ENCODE measurements at regions of chr1 and their contacts with region 1.

Region 1: GRCh38 chr1:203048555-203049051 is 22.3 kb downstream of the PPFIA4 start:
- DNase-seq: no peak
- ATAC-seq: peak; percentile 64
- H3K4me3 ChIP-seq: no peak overlapping the region
- H3K27ac ChIP-seq: no peak overlapping the region
- H3K4me1 ChIP-seq: no peaks in the 10 kb centered on the region
- H3K27me3 ChIP-seq: peaks cover 0 to 2% of the 10 kb centered on the region in 2 experiments; a peak in 1 of 4 replicates
- CTCF ChIP-seq: no peak
- EP300 ChIP-seq: no peak
- POLR2A ChIP-seq: no peak
- RAD21 ChIP-seq: no peak

Region 2: GRCh38 chr1:203006948-203007871 is 41.4 kb before region 1 on chr1 and contains the start of gene TMEM183A:
- CTCF ChIA-PET with region 1: no interaction called
- POLR2A ChIA-PET with region 1: no interaction called
- RAD21 ChIA-PET with region 1: no interaction called
- SMC1A ChIA-PET with region 1: no interaction called
- in situ Hi-C with region 1: no loop called
- intact Hi-C with region 1: no loop called
- DNase-seq: peak; percentile 92
- ATAC-seq: peak; percentile 91
- H3K4me3 ChIP-seq: peak within 1 kb of the TSS; percentile 99
- H3K27ac ChIP-seq: peak within 1 kb of the TSS; percentile 96
- H3K4me1 ChIP-seq: peaks cover 5% of the 10 kb centered on the region
- H3K27me3 ChIP-seq: no peaks in the 10 kb centered on the region
- CTCF ChIP-seq: no peak
- EP300 ChIP-seq: no peak
- POLR2A ChIP-seq: peak; percentile 95
- RAD21 ChIP-seq: no peak
- polyA plus RNA-seq, gene TMEM183A: 12.3 to 25.0 TPM

Region 3: DNA sequence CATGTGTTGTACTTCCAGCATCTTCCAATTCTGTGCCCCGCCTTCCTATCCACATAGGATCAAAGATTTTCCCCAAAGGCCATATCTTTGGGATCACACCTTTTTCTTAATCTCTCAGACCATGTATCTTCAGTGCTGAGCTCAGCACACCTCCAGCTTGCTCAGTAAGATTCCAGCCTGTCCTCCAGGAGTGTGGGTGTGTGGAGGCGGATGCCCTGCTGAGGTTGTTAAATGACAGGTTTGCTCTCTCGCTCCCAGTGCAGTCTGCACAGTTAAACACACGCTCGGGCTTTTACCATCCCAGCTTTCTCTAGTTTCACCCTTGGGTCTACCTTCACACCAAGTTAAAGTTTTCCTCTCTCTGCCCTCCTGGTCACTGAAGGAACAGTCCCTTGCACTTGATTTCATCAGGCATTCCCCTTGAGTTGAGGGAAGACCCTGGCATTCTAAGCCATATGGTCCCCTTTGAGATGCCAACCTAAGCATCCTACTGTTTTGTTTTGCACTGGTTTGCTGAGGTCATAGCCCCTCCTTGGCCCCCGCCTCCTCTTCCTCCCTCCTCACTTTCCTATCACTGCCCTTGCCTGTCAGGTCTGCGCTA is 23.5 kb after region 1 on chr1:
- CTCF ChIA-PET with region 1: no interaction called
- POLR2A ChIA-PET with region 1: no interaction called
- RAD21 ChIA-PET with region 1: no interaction called
- SMC1A ChIA-PET with region 1: no interaction called
- in situ Hi-C with region 1: no loop called
- intact Hi-C with region 1: no loop called
- DNase-seq: no peak
- ATAC-seq: no peak
- H3K4me3 ChIP-seq: no peak overlapping the region
- H3K27ac ChIP-seq: no peak overlapping the region
- H3K4me1 ChIP-seq: no peaks in the 10 kb centered on the region; the same call in 1 of the 2 replicates
- H3K27me3 ChIP-seq: peaks cover 2 to 8% of the 10 kb centered on the region in 2 experiments; a peak in 2 of 4 replicates
- CTCF ChIP-seq: no peak
- EP300 ChIP-seq: no peak
- POLR2A ChIP-seq: no peak
- RAD21 ChIP-seq: no peak

Region 4: DNA sequence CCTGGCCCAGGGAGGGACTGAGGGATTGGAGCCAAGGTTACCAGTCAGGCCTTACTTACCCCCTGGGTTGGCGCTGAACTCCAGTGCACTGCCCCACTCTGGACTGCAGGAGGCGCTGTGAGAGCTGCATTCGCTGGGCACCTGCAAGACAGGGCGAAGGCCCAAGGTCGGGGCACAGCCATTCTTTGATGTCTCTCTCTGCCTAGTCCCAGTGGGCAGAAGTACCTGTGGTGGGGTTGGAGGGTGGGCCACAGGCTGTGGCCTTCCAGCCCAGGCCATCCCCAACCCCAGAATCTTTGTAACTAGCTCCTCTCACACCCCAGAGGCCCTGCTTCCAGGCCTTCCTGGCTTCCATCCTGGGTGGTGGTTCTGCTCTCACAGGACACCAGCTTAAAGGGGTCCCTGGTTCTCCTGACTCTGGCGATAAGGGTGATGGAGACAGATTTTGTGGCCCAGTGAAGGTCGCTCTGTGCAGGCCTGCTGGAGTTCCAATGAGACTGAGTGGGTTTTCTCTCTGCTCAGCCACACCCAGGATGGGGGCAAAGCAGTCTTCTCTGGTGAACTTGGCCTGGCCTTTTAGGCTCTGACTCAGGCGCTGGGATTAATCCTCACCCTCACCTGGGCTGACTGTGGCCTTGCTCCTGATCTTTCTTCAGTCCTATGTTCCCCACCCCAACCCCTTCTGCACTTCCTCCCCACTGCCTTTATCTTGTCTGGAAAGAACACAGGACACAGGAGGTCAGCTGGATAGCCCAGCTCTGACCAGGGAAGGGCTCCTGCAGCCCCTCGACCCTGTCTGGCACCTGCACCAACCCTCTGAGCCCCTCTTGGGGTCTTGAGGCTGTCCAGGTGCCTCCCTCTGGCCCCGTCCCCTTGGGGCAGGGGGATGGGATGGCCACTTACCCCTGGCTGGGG is 36.2 kb after region 1 on chr1:
- CTCF ChIA-PET with region 1: no interaction called
- POLR2A ChIA-PET with region 1: no interaction called
- RAD21 ChIA-PET with region 1: no interaction called
- SMC1A ChIA-PET with region 1: no interaction called
- in situ Hi-C with region 1: no loop called
- intact Hi-C with region 1: loop called (anchors 1 kb)
- DNase-seq: no peak
- ATAC-seq: peak; percentile 75
- H3K4me3 ChIP-seq: no peak overlapping the region
- H3K27ac ChIP-seq: no peak overlapping the region
- H3K4me1 ChIP-seq: no peaks in the 10 kb centered on the region
- H3K27me3 ChIP-seq: peaks cover 0 to 3% of the 10 kb centered on the region in 2 experiments; a peak in 2 of 4 replicates
- CTCF ChIP-seq: peak; percentile 39 to 73 (median 58)
- EP300 ChIP-seq: no peak
- POLR2A ChIP-seq: no peak
- RAD21 ChIP-seq: peak; percentile 51

Region 5: DNA sequence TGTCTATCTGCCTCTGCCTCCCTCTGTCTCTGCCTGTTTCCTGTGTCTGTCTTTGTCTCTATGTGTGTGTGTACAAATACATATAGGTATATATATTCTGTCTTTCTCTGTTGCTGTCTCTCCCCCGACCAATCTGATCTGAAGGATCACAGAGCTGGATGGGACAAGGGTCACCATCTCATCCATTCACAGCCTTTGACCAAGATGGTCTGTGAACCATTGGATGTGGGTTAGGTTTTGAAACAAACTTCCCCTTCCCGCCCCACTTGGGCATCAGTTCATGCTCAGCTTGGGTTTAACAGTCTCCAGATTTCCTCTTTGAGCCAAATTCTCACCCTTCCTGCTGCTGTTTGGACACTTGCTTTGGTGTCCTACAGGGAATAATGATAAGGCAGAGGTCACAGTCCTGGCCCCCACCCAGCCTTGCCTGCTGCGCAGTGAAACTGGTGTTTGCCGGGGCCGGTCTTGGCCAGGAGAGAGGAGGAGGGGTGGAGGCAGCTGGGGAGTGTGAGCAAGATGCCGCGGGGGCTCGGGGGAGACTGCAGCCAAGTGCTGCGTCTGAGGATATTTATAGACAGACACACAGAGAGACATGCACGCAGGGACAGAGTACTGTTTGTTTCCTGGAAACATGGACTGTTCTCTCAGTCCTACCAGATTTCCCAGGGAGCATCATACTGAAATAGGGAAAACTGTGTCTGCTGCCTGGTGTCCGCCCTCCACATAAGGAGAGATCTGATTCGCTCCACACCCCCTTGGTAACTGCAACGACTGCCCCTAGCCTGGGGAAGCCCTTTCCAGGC is 229.7 kb after region 1 on chr1:
- CTCF ChIA-PET with region 1: no interaction called
- POLR2A ChIA-PET with region 1: no interaction called
- RAD21 ChIA-PET with region 1: no interaction called
- SMC1A ChIA-PET with region 1: no interaction called
- in situ Hi-C with region 1: no loop called
- intact Hi-C with region 1: no loop called
- DNase-seq: no peak
- ATAC-seq: no peak
- H3K4me3 ChIP-seq: peak overlapping the region; percentile 1; the same call in 1 of the 2 replicates
- H3K27ac ChIP-seq: peak overlapping the region; percentile 60
- H3K4me1 ChIP-seq: peaks cover 55% of the 10 kb centered on the region
- H3K27me3 ChIP-seq: no peaks in the 10 kb centered on the region
- CTCF ChIP-seq: no peak
- EP300 ChIP-seq: no peak
- POLR2A ChIP-seq: peak; percentile 55
- RAD21 ChIP-seq: no peak

Measured in GM12878 (cell line).